ENCODE measurements at regions of chr2 and their contacts with region 1.

Region 1: GRCh38 chr2:7165736-7166135 is 248.5 kb downstream of the RNF144A start:
- DNase-seq: no peak
- ATAC-seq: no peak
- H3K4me3 ChIP-seq: no peak overlapping the region
- H3K27ac ChIP-seq: no peak overlapping the region
- H3K4me1 ChIP-seq: no peaks in the 10 kb centered on the region
- H3K27me3 ChIP-seq: no peaks in the 10 kb centered on the region
- CTCF ChIP-seq: no peak
- POLR2A ChIP-seq: no peak

Region 2: DNA sequence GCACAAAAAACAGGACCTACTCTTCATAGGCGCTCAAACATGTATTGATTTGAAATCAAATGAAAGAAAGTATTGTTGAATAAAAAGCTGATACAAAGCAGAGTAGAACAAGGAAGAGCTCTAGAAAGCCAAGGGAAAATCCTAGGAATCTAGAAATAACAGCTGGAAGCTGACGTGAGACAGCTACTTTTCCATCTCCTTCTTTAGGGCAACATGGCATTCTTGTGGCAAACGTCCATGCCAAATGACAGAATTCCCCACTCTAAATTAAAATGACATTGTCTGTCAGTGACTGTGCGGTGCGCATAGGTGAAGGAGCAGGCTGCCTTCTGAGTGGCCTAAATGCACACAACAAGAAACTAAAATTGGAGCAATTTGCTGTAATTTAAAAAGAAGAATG is 916.2 kb before region 1 on chr2:
- in situ Hi-C with region 1: no loop called
- intact Hi-C with region 1: no loop called
- DNase-seq: no peak
- ATAC-seq: no peak
- H3K4me3 ChIP-seq: no peak overlapping the region
- H3K27ac ChIP-seq: no peak overlapping the region
- H3K4me1 ChIP-seq: no peaks in the 10 kb centered on the region
- H3K27me3 ChIP-seq: no peaks in the 10 kb centered on the region
- CTCF ChIP-seq: no peak
- POLR2A ChIP-seq: no peak

Region 3: DNA sequence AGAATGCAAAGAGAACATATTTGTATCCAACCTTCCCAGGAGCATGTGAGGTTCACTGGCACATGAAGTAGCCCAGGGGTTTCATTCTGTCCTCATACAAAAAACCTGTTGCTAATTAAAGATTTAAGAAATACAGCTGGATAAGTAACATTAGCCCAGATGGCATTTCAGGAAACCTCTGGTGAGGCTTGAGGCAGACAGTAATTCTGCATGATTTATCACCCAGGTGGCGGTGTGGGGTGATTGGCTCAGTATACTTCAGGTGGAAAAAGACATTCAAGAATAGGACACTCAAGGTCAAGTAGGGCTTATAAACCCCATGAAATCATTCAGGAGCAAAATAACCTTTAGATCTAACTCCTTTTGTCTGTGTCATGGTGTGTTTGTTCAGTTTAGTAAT is 11.1 kb before region 1 on chr2:
- in situ Hi-C with region 1: no loop called
- intact Hi-C with region 1: loop called (anchors 1 kb)
- DNase-seq: no peak
- ATAC-seq: no peak
- H3K4me3 ChIP-seq: no peak overlapping the region
- H3K27ac ChIP-seq: no peak overlapping the region
- H3K4me1 ChIP-seq: no peaks in the 10 kb centered on the region
- H3K27me3 ChIP-seq: no peaks in the 10 kb centered on the region
- CTCF ChIP-seq: no peak
- POLR2A ChIP-seq: no peak

Region 4: GRCh38 chr2:7333189-7333765 is 167.5 kb after region 1 on chr2:
- in situ Hi-C with region 1: no loop called
- intact Hi-C with region 1: no loop called
- DNase-seq: no peak
- ATAC-seq: no peak
- H3K4me3 ChIP-seq: no peak overlapping the region
- H3K27ac ChIP-seq: no peak overlapping the region
- H3K4me1 ChIP-seq: no peaks in the 10 kb centered on the region
- H3K27me3 ChIP-seq: no peaks in the 10 kb centered on the region
- CTCF ChIP-seq: no peak
- POLR2A ChIP-seq: no peak

Measured in gastrocnemius medialis (tissue), 4 donors.